ENCODE measurements at regions of chr6 and their contacts with region 1.

Region 1: DNA sequence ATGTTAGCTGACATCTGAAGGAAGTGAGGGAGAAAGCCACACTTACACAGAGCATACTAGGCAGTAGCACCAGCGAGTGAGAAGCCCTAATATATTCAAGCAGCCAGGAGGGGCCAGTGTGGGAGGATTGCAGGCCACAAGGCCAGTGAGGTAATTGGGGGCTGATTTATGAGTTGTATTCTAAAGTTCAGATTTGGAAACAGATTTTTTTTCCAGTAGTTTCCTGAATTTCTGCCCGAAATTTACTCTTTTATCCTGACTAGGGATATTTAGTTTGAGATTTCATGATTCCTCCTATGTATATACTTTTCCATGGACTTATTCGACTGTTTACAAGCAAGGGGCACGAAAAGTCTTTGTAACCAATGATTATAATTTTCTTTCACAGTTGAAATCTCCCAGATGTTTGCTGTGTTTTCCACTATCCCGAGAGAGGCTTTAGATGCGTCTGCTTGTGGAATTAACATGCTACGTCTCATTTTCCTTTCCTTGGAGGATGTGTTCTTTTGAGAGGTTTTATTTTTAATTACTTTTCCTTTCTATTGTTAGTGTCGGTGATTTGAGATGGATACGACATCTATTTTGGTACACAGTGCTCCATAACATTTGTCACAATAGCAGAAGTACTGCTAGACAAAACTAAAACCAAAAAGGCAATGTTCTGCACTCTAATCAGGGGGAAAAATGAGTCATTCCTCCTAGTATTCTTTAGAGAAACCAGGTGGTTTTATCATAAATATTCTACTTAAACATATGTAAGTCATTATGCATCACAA is 356.3 kb upstream of the HSF2 start:
- DNase-seq: peak; percentile 5
- H3K4me3 Mint-ChIP-seq: no peak overlapping the region
- H3K27ac Mint-ChIP-seq: peak overlapping the region; percentile 15
- H3K4me1 Mint-ChIP-seq: peaks cover 16% of the 10 kb centered on the region
- H3K27me3 Mint-ChIP-seq: peaks cover 10% of the 10 kb centered on the region

Region 2: DNA sequence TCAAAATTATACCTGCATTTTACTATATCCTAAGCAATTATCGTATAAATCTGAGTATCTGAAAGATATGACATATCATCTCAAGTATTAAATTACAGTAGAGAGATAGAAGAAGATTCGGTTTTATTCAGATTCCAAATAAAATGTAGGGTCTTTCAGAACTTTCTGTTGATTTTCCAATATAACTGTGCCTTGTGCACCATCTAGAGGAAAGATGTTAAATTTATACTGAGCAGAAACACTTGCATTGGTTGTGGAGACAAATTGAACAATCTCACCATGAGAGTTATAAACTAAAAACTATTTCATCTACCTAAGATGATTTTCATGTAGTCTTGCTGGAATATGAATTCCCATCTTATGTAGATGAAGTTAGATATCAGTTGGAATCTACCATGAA is 329.5 kb after region 1 on chr6:
- CTCF ChIA-PET with region 1: no interaction called
- intact Hi-C with region 1: loop called (anchors 5 kb)
- DNase-seq: no peak
- H3K4me3 Mint-ChIP-seq: no peak overlapping the region
- H3K27ac Mint-ChIP-seq: no peak overlapping the region
- H3K4me1 Mint-ChIP-seq: peaks cover 20% of the 10 kb centered on the region
- H3K27me3 Mint-ChIP-seq: peaks cover 10% of the 10 kb centered on the region

Measured in activated naive CD4-positive, alpha-beta T cell treated with anti-CD3 and anti-CD28 coated beads for 36 hours (primary cell).